ENCODE measurements at regions of chr12 and their contacts with region 1.

Region 1: DNA sequence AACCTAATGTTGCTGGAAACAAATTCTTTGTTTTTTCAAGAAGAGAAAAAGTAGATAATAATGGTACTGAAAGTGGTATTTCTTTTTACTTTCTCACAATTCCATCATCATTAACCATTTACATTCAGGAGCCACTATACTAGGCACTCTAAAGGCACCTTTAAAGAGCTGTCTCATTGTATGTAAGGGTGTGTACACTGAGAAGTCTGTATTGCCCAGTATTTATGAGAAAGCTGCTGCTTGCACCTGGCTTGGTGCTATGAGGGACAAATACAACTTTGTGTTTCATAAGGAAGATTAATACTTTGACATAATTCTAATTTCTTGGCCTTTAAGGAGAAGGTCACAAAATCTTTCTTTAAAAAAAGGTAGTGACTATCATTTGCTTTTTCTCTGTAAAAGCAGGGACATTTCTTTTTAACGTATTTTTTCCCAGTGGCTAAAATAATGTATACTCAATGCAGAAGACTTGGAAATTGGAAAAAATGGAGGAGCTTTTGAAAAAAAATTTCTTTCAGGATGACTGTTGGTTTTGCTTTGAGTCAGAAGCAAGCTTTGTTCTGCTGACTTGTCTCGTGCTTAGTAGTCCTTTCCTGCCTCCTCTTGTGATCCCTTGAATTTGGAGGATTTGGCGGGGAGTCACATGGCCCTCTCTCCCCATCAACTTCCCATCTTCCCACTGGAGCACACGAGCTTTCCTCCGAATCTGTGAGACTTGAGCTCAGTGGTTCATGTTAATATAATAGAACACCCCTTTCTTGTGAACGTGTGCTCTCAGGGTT is 50.1 kb downstream of the RASSF3 start:
- DNase-seq: no peak
- ATAC-seq: no peak
- H3K4me3 ChIP-seq: no peak overlapping the region
- H3K4me3 Mint-ChIP-seq: peak overlapping the region in 9 of 10 donors; percentile 8 to 68 (median 43)
- H3K27ac ChIP-seq: peak overlapping the region; percentile 32
- H3K27ac Mint-ChIP-seq: peak overlapping the region in 8 of 9 donors; percentile 51 to 97 (median 84)
- H3K4me1 ChIP-seq: peaks cover 54 to 84% of the 10 kb centered on the region in 2 donors
- H3K4me1 Mint-ChIP-seq: peaks cover 60 to 98% (median 89%) of the 10 kb centered on the region in 7 donors
- H3K27me3 ChIP-seq: no peaks in the 10 kb centered on the region
- H3K27me3 Mint-ChIP-seq: no peaks in the 10 kb centered on the region

Region 2: DNA sequence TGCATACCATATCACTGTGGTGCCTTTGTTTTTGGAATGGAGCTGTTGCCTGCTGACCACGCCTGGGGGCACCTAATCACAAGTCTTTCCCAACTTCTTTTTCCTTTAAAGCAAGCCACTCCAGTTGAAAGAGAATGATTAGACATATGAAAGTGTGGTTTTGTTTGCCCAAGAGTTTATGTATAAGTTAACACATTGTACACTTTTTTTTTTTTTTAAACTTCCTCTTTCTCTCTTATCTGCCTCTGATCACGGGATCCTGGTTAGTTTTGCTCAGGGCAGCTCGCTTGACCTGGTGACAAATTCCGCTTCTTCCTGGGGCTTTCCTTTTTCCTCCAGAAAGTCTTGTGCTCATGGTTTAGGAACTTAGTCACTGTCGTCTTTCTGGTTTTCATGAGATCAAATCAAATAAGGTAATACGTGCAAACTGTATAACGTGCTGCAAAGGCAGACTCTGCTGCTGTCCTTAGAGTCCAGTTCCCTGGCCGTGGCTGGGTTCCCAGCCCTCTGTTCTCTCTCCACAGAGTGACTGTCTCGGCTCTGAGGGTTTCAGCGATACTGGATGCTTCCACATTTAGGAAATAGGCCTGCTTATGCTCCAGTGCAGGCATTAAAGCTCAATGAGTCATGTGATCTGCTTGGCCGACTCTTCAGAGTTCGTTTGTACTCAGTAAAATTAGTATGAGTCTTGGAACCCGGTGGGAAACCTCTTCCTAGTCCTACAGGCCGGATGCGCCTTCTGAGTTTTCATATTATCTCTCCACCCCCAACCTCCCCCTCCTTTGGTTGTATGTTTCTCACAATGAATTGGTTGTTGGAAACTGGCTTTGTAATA is 35.0 kb before region 1 on chr12:
- CTCF ChIA-PET with region 1: interaction called, 3 read pairs
- POLR2A ChIA-PET with region 1: interaction called, 900 read pairs
- intact Hi-C with region 1: loop called in 1 of 2 experiments (anchors 2 kb)
- DNase-seq: peak in 1 of 9 donors; percentile 40
- ATAC-seq: peak; percentile 73
- H3K4me3 ChIP-seq: peak overlapping the region; percentile 14
- H3K4me3 Mint-ChIP-seq: peak overlapping the region; percentile 78 to 93 (median 88)
- H3K27ac ChIP-seq: peak overlapping the region; percentile 66
- H3K27ac Mint-ChIP-seq: peak overlapping the region; percentile 79 to 91 (median 88)
- H3K4me1 ChIP-seq: peaks cover 45 to 54% of the 10 kb centered on the region in 2 donors
- H3K4me1 Mint-ChIP-seq: peaks cover 34 to 91% (median 77%) of the 10 kb centered on the region in 7 donors
- H3K27me3 ChIP-seq: no peaks in the 10 kb centered on the region
- H3K27me3 Mint-ChIP-seq: no peaks in the 10 kb centered on the region

Region 3: DNA sequence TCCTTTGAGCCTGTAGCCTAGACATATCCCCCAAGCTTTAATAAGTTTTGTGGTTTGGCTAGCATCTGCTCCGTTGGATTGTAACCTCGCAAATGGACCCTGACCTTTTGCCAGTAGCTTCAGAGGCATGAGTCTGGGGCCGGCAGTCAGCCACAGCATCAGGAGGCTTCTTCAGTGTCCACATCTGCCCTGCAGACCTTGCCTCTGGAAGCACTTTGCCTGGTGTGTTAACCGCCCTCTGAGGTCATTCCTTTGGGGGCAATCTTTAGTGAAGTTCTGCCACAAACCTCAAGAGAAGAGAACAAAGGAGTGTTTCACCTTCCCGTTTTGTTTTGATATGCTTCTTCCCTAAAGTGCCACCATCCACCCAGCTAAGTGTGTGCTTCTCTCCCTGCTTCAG is 27.4 kb after region 1 on chr12:
- CTCF ChIA-PET with region 1: interaction called, 5 read pairs
- POLR2A ChIA-PET with region 1: interaction called, 751 read pairs
- intact Hi-C with region 1: no loop called
- DNase-seq: peak in 1 of 9 donors; percentile 38
- ATAC-seq: no peak
- H3K4me3 ChIP-seq: peak overlapping the region; percentile 7
- H3K4me3 Mint-ChIP-seq: peak overlapping the region; percentile 52 to 84 (median 73)
- H3K27ac ChIP-seq: peak overlapping the region; percentile 63
- H3K27ac Mint-ChIP-seq: peak overlapping the region; percentile 74 to 98 (median 96)
- H3K4me1 ChIP-seq: peaks cover 33 to 81% of the 10 kb centered on the region in 2 donors
- H3K4me1 Mint-ChIP-seq: peaks cover 54 to 95% (median 78%) of the 10 kb centered on the region in 7 donors
- H3K27me3 ChIP-seq: no peaks in the 10 kb centered on the region
- H3K27me3 Mint-ChIP-seq: no peaks in the 10 kb centered on the region

Measured in naive thymus-derived CD4-positive, alpha-beta T cell (primary cell).